Activated CD4-positive, alpha-beta memory T cell treated with anti-CD3 and anti-CD28 coated beads for 36 hours (primary cell): ENCODE measurements at regions of chr16 and their contacts with region 1.

Region 1: GRCh38 chr16:1782352-1783091 is at the starts of genes NUBP2 and SPSB3:
- DNase-seq: peak; percentile 100
- H3K4me3 Mint-ChIP-seq: peak within 1 kb of the TSS; percentile 92
- H3K27ac Mint-ChIP-seq: peak within 1 kb of the TSS; percentile 78
- H3K4me1 Mint-ChIP-seq: peaks cover 20% of the 10 kb centered on the region
- H3K27me3 Mint-ChIP-seq: no peaks in the 10 kb centered on the region
- total RNA-seq, gene NUBP2: 45.9 to 48.0 TPM
- total RNA-seq, gene SPSB3: 21.2 to 21.8 TPM

Region 2: GRCh38 chr16:1826691-1827575 is 44.4 kb after region 1 on chr16 and contains the starts of genes FAHD1 and HAGH:
- CTCF ChIA-PET with region 1: interaction called, 8 read pairs
- POLR2A ChIA-PET with region 1: interaction called, 8 read pairs
- intact Hi-C with region 1: loop called (anchors 1 kb)
- DNase-seq: peak; percentile 93
- H3K4me3 Mint-ChIP-seq: peak within 1 kb of the TSS; percentile 91
- H3K27ac Mint-ChIP-seq: peak within 1 kb of the TSS; percentile 76
- H3K4me1 Mint-ChIP-seq: peaks cover 40% of the 10 kb centered on the region
- H3K27me3 Mint-ChIP-seq: no peaks in the 10 kb centered on the region
- total RNA-seq, gene FAHD1: 8.5 to 8.8 TPM
- total RNA-seq, gene HAGH: 45.1 to 46.2 TPM

Region 3: GRCh38 chr16:1942810-1943726 is 160.5 kb after region 1 on chr16 and contains the start of gene MSRB1:
- CTCF ChIA-PET with region 1: no interaction called
- POLR2A ChIA-PET with region 1: interaction called, 4 read pairs
- intact Hi-C with region 1: loop called (anchors 2 kb)
- DNase-seq: peak; percentile 100
- H3K4me3 Mint-ChIP-seq: peak within 1 kb of the TSS; percentile 88
- H3K27ac Mint-ChIP-seq: peak within 1 kb of the TSS; percentile 73
- H3K4me1 Mint-ChIP-seq: peaks cover 25% of the 10 kb centered on the region
- H3K27me3 Mint-ChIP-seq: no peaks in the 10 kb centered on the region
- total RNA-seq, gene MSRB1: 20.7 to 23.6 TPM

Region 4: DNA sequence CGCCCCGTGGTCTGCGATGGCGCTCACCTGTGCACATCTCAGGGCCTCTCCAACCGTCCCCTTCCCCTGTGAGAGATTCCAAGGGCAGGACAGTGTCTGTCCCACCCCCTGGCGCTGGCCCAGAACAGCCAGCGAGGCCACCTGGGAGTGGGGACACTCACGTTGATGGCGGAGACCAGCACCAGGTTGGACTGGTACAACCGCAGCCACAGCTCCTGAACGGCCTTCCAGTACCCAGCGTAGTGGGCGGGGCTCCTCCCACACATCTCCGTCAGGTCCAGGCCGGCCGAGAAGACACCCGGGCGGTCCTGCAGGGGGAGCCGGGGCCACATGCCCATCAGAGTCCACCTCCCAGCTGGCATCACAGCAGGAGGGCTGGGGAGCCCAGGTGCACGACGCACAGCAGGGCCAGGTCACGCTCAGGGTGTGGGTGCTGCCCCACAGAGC is 461.7 kb after region 1 on chr16:
- CTCF ChIA-PET with region 1: no interaction called
- POLR2A ChIA-PET with region 1: no interaction called
- intact Hi-C with region 1: no loop called
- DNase-seq: no peak
- H3K4me3 Mint-ChIP-seq: no peak overlapping the region
- H3K27ac Mint-ChIP-seq: no peak overlapping the region
- H3K4me1 Mint-ChIP-seq: no peaks in the 10 kb centered on the region
- H3K27me3 Mint-ChIP-seq: no peaks in the 10 kb centered on the region